Activated B cell treated with CpG ODN at 0.5 μM for 24 hours (primary cell): ENCODE measurements at regions of chr11 and their contacts with region 1.

Region 1: GRCh38 chr11:116901964-116902688 is 64.7 kb upstream of the APOA1 start:
- DNase-seq: no peak
- ATAC-seq: no peak
- H3K4me3 Mint-ChIP-seq: no peak overlapping the region
- H3K27ac Mint-ChIP-seq: no peak overlapping the region
- H3K4me1 Mint-ChIP-seq: peaks cover 10% of the 10 kb centered on the region
- H3K27me3 Mint-ChIP-seq: no peaks in the 10 kb centered on the region
- CTCF ChIP-seq: no peak

Region 2: DNA sequence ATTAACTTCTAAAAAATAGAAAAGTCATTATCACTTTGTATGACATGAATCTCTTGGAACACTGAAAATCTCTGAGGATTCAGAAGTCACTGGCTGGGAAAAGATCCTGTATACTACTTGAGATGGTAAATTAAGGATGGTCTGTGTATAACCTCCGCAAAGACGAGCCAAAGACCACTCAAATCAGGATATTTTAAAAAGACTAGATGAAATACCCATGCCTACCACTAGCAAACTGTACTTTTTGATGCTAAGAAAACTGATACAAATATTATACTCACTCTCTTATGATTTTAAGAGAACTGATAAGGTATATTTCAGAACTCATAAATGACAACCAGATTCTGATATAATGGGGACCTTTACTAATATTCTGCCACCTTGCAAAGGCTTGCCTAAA is 13.9 kb after region 1 on chr11:
- CTCF ChIA-PET with region 1: no interaction called
- POLR2A ChIA-PET with region 1: no interaction called
- intact Hi-C with region 1: loop called (anchors 2 kb)
- DNase-seq: no peak
- ATAC-seq: no peak
- H3K4me3 Mint-ChIP-seq: no peak overlapping the region
- H3K27ac Mint-ChIP-seq: no peak overlapping the region
- H3K4me1 Mint-ChIP-seq: peaks cover 27% of the 10 kb centered on the region
- H3K27me3 Mint-ChIP-seq: no peaks in the 10 kb centered on the region
- CTCF ChIP-seq: no peak